ENCODE measurements at regions of chr3 and their contacts with region 1.

Region 1: GRCh38 chr3:66638717-66639116 is 137.9 kb upstream of the LRIG1 start:
- DNase-seq: no peak
- H3K4me3 ChIP-seq: no peak overlapping the region
- H3K4me3 Mint-ChIP-seq: no peak overlapping the region
- H3K27ac Mint-ChIP-seq: no peak overlapping the region
- H3K4me1 ChIP-seq: peaks cover 10% of the 10 kb centered on the region
- H3K4me1 Mint-ChIP-seq: no peaks in the 10 kb centered on the region
- H3K27me3 ChIP-seq: no peaks in the 10 kb centered on the region
- H3K27me3 Mint-ChIP-seq: no peaks in the 10 kb centered on the region
- CTCF ChIP-seq: no peak

Region 2: DNA sequence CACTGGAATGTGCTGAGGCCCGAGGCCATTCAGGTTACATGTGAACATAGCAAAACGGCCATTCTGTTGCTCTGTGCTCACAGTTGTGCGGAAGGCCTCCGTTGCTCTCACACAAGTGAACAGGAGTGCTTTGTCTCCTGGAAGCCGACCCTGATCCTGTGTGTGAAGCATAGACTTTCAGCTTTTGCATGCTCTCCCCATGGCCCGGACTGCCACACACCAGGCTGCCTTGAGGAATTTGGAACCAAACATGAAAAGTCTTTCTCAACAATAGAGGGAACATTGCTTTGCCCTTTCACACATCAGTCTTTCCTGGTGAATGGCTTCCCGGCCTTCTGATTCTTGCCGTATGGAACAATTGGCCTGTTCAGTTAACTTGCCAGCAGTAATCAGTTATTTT is 17.0 kb after region 1 on chr3:
- CTCF ChIA-PET with region 1: interaction called, 6 read pairs
- POLR2A ChIA-PET with region 1: no interaction called
- intact Hi-C with region 1: loop called (anchors 1 kb)
- DNase-seq: peak in 1 of 2 experiments; percentile 14
- H3K4me3 ChIP-seq: no peak overlapping the region
- H3K4me3 Mint-ChIP-seq: no peak overlapping the region
- H3K27ac Mint-ChIP-seq: no peak overlapping the region
- H3K4me1 ChIP-seq: peaks cover 14% of the 10 kb centered on the region; the same call in 1 of the 2 replicates
- H3K4me1 Mint-ChIP-seq: peaks cover 13% of the 10 kb centered on the region
- H3K27me3 ChIP-seq: no peaks in the 10 kb centered on the region
- H3K27me3 Mint-ChIP-seq: no peaks in the 10 kb centered on the region
- CTCF ChIP-seq: no peak

Region 3: GRCh38 chr3:67067251-67067650 is 428.5 kb after region 1 on chr3:
- CTCF ChIA-PET with region 1: no interaction called
- POLR2A ChIA-PET with region 1: no interaction called
- intact Hi-C with region 1: no loop called
- DNase-seq: no peak
- H3K4me3 ChIP-seq: no peak overlapping the region
- H3K4me3 Mint-ChIP-seq: no peak overlapping the region
- H3K27ac Mint-ChIP-seq: no peak overlapping the region
- H3K4me1 ChIP-seq: no peaks in the 10 kb centered on the region
- H3K4me1 Mint-ChIP-seq: no peaks in the 10 kb centered on the region
- H3K27me3 ChIP-seq: no peaks in the 10 kb centered on the region
- H3K27me3 Mint-ChIP-seq: peaks cover 13% of the 10 kb centered on the region
- CTCF ChIP-seq: no peak